A673 (cell line): ENCODE measurements at regions of chr5 and their contacts with region 1.

Region 1: DNA sequence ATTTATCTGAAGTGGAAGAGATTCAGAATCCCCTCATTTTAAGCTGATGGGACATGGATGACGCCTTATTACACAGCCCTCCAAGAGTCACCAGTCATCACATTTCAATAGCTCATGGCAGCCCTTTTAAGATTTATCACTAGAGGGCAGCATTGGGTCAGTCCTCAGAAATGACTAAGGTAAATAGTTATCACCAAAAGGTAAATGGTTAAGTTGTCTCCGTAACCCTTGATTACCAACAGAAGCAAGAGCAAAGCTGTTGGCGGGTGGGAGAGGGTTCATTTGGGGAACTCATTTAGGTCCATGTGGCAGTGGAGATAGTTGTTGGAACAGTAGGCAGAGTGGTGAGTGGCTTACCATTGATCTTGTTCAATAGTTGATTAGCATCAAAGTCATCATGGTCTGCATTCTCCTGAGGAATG is 12.0 kb upstream of the C9 start:
- DNase-seq: peak; percentile 79
- H3K4me3 ChIP-seq: no peak overlapping the region
- H3K27ac ChIP-seq: no peak overlapping the region
- H3K4me1 ChIP-seq: no peaks in the 10 kb centered on the region
- H3K27me3 ChIP-seq: no peaks in the 10 kb centered on the region
- CTCF ChIP-seq: peak; percentile 86

Region 2: GRCh38 chr5:39547553-39548154 is 171.3 kb after region 1 on chr5:
- CTCF ChIA-PET with region 1: interaction called, 87 read pairs
- POLR2A ChIA-PET with region 1: no interaction called
- intact Hi-C with region 1: loop called (anchors 1 kb)
- DNase-seq: peak; percentile 83
- H3K4me3 ChIP-seq: no peak overlapping the region
- H3K27ac ChIP-seq: no peak overlapping the region
- H3K4me1 ChIP-seq: peaks cover 8% of the 10 kb centered on the region
- H3K27me3 ChIP-seq: no peaks in the 10 kb centered on the region
- CTCF ChIP-seq: peak; percentile 84

Region 3: DNA sequence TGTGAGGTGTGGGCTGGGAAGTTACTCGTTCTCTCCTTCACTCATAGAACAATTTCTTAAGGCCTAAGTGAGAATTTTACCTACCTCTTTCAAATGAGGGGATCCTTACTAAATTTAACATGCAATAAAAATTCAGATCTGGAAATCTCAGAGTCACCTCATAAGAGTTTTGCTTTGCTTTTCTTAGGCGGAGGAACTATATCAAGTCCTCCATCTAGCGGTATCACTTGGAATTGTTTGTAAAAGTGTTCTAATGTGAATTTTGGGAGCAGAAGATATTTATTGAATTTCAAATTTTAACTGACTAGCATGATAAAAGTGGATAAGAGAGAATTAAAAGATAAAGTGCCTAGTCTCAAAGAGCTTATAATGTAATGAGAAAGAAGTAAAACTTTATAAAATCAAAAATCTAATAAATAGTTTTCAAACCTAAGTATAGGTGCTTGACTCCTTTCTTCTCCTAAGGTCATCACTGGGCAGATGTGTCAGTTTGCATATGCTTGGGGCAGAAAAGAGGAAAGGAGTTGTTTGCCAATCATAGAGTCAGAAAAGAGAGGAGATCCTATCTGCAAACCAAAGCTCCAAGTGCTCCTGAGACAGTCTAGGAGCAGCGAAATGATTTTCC is 194.2 kb after region 1 on chr5:
- CTCF ChIA-PET with region 1: interaction called, 6 read pairs
- POLR2A ChIA-PET with region 1: no interaction called
- intact Hi-C with region 1: loop called (anchors 1 kb)
- DNase-seq: peak; percentile 65
- H3K4me3 ChIP-seq: no peak overlapping the region
- H3K27ac ChIP-seq: no peak overlapping the region
- H3K4me1 ChIP-seq: no peaks in the 10 kb centered on the region
- H3K27me3 ChIP-seq: peaks cover 11% of the 10 kb centered on the region
- CTCF ChIP-seq: peak; percentile 70